ENCODE measurements at regions of chr15 and their contacts with region 1.

Region 1: DNA sequence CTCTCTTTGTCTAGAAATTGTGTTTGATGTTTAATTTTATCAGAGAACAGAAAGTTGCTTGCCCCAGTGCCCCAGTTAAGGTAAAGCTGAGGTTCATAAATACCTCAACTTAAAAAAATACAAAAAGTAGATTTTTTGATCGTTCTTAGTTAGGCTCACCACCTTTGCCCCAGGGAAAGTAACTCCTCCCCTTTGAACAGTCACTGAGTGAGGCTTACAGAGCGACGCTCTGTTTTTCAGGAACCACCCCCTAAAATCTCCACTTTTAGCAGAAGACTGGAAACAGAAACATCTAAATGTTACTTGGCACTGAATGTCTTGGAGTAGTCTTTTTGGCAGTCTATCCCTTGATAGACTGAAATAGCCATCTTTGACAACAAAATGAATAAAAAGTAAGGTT is 24.9 kb downstream of the BLM start:
- DNase-seq: no peak
- ATAC-seq: no peak
- H3K4me3 ChIP-seq: no peak overlapping the region
- H3K27ac ChIP-seq: no peak overlapping the region
- H3K4me1 ChIP-seq: peaks cover 0 to 17% (median 0%) of the 10 kb centered on the region in 9 donors
- H3K27me3 ChIP-seq: no peaks in the 10 kb centered on the region
- CTCF ChIP-seq: no peak

Region 2: DNA sequence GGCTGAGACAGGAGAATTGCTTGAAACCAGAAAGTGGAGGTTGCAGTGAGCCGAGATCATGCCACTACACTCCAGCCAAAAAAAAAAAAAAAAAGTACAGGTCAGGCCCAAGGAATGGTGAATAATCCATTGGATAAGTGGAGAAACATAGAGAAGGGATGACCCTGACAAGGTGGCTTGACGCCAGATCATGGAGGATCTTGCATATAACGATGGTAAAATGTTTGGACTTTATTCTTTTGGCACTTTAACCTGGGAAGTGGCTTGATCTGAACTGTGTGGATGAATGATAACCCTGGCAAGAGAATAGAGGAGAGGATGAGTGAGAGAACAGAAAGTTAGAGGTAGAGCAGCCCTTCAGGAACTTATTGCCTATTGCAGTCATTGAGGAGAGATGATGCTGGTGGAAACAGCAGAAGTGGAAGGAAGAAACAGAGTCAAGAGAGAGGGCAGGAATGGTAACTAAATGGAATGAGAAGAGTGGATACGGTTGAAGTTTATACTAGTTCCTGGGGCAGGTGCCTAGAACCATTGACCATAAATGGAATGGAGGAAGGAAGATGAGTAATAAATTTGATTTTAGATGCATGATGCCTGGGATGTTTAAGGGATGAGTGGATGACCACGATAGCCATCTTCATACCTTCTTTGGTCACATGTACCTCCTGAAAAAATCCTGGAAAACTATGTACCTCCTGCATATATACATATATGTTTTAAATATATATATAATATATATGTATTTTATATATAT is 32.8 kb after region 1 on chr15:
- intact Hi-C with region 1: loop called in 1 of 10 experiments (anchors 1 kb)
- DNase-seq: no peak
- ATAC-seq: no peak
- H3K4me3 ChIP-seq: no peak overlapping the region
- H3K27ac ChIP-seq: no peak overlapping the region
- H3K4me1 ChIP-seq: peaks cover 0 to 9% (median 0%) of the 10 kb centered on the region in 9 donors
- H3K27me3 ChIP-seq: no peaks in the 10 kb centered on the region
- CTCF ChIP-seq: no peak

Measured in heart right ventricle (tissue), 16 donors.